ENCODE measurements at regions of chr5 and their contacts with region 1.

Region 1: GRCh38 chr5:150647621-150648251 is 7.3 kb downstream of the SYNPO start:
- DNase-seq: peak; percentile 86 to 94 (median 88)
- ATAC-seq: peak; percentile 52 to 68 (median 58)
- H3K4me3 ChIP-seq: peak overlapping the region in 1 of 12 donors; percentile 11
- H3K27ac ChIP-seq: peak overlapping the region; percentile 61 to 100 (median 95)
- H3K4me1 ChIP-seq: peaks cover 27 to 100% (median 91%) of the 10 kb centered on the region in 12 donors
- H3K27me3 ChIP-seq: no peaks in the 10 kb centered on the region
- CTCF ChIP-seq: peak in 2 of 12 donors; percentile 20 to 30
- POLR2A ChIP-seq: no peak

Region 2: GRCh38 chr5:150624334-150625163 is 23.2 kb before region 1 on chr5:
- intact Hi-C with region 1: loop called in 2 of 10 experiments (anchors 2 kb)
- DNase-seq: peak in 4 of 5 donors; percentile 64 to 73 (median 68)
- ATAC-seq: peak in 3 of 4 donors; percentile 31 to 36 (median 34)
- H3K4me3 ChIP-seq: peak overlapping the region; percentile 52 to 99 (median 92)
- H3K27ac ChIP-seq: peak overlapping the region; percentile 93 to 100 (median 99)
- H3K4me1 ChIP-seq: peaks cover 12 to 90% (median 75%) of the 10 kb centered on the region in 12 donors
- H3K27me3 ChIP-seq: peaks cover 0 to 10% (median 0%) of the 10 kb centered on the region in 9 donors
- CTCF ChIP-seq: peak in 5 of 12 donors; percentile 11 to 48 (median 15)
- POLR2A ChIP-seq: no peak

Region 3: GRCh38 chr5:150789943-150790611 is 142.3 kb after region 1 on chr5:
- intact Hi-C with region 1: no loop called
- DNase-seq: peak in 2 of 5 donors; percentile 35 to 81
- ATAC-seq: peak; percentile 51 to 95 (median 94)
- H3K4me3 ChIP-seq: peak overlapping the region in 4 of 12 donors; percentile 7 to 10 (median 8)
- H3K27ac ChIP-seq: peak overlapping the region in 10 of 12 donors; percentile 15 to 84 (median 51)
- H3K4me1 ChIP-seq: peaks cover 3 to 83% (median 22%) of the 10 kb centered on the region in 12 donors
- H3K27me3 ChIP-seq: no peaks in the 10 kb centered on the region
- CTCF ChIP-seq: no peak
- POLR2A ChIP-seq: no peak

Region 4: GRCh38 chr5:150816946-150817345 is 169.2 kb after region 1 on chr5:
- intact Hi-C with region 1: no loop called
- DNase-seq: no peak
- ATAC-seq: no peak
- H3K4me3 ChIP-seq: no peak overlapping the region
- H3K27ac ChIP-seq: no peak overlapping the region
- H3K4me1 ChIP-seq: no peaks in the 10 kb centered on the region
- H3K27me3 ChIP-seq: no peaks in the 10 kb centered on the region
- CTCF ChIP-seq: no peak
- POLR2A ChIP-seq: no peak

Region 5: GRCh38 chr5:150904479-150905318 is 257.0 kb after region 1 on chr5 and contains the start of gene ZNF300:
- intact Hi-C with region 1: no loop called
- DNase-seq: peak; percentile 85 to 91 (median 89)
- ATAC-seq: peak; percentile 96 to 100 (median 100)
- H3K4me3 ChIP-seq: peak within 1 kb of the TSS; percentile 2 to 71 (median 53)
- H3K27ac ChIP-seq: peak within 1 kb of the TSS in 10 of 12 donors; percentile 40 to 91 (median 69)
- H3K4me1 ChIP-seq: peaks cover 0 to 5% (median 0%) of the 10 kb centered on the region in 12 donors
- H3K27me3 ChIP-seq: no peaks in the 10 kb centered on the region
- CTCF ChIP-seq: no peak
- POLR2A ChIP-seq: no peak
- total RNA-seq, gene ZNF300: 0.30 to 1.3 (median 0.69) TPM

Measured in heart left ventricle (tissue), 16 donors.